ENCODE measurements at regions of chr9 and their contacts with region 1.

Region 1: DNA sequence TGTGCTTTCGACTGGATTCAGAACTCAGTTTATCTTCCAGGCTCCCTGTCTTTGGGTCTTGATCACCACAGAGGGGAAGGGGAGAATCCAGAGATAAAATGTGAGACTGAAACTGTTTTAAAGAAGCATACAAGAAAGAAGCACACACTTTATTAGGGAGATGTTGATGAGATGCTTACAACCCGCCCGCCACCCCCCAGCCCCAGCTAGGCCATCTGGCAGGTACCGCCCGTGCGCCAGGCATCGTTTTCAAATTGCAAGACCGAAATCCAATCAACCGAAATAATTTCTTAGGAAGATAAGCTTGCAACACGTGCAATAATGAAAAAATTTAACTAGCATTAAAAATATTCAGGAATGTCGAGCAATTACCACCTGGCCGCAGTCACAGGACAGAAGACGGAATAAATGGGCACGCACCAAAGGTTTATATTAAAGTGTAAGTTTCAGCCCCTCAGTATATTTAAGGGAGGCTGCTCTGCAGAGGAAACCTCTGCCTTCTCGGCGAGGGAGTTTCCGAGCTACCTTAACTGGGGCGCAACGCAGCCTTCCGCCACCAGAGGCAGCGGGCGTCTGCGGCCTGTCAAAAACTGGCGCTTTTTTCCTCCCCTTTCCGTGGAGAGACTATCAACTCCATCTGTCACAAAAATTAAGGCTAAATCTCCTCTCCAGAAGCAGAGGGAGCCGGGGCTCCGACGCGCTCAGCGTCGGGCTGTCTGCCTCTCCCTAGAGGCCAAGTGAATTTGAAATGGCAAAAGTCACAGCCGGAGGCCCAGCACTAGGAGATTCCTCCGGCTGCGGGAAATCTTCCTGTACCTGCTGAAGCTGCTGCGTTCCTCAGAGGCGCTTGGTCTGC is 996 bp upstream of the GAS1 start:
- DNase-seq: peak; percentile 82
- H3K4me3 ChIP-seq: peak overlapping the region; percentile 83
- H3K27ac ChIP-seq: peak overlapping the region; percentile 77
- H3K4me1 ChIP-seq: peaks cover 5% of the 10 kb centered on the region
- H3K27me3 ChIP-seq: peaks cover 23% of the 10 kb centered on the region
- CTCF ChIP-seq: peak; percentile 84

Region 2: DNA sequence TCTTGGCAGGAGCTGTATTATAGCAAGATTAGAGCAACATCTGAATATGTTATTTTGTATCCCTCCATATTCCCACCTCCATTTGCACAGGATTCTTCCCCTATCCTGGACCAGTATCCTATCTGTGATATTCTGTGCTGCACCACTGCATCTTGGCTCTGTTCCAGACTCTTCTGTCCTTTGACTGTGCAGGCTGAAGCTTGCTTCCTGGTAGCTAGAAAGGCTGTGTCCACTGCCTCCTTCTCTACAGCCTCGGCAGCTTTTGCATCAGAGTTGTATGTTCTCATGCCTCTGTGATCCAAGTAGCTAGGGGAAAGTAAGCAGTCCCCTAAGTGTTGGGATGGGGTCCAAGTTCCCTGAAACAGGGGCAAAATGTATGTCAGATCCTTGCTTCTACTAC is 105.1 kb before region 1 on chr9:
- intact Hi-C with region 1: no loop called
- DNase-seq: no peak
- H3K4me3 ChIP-seq: no peak overlapping the region
- H3K27ac ChIP-seq: no peak overlapping the region
- H3K4me1 ChIP-seq: no peaks in the 10 kb centered on the region
- H3K27me3 ChIP-seq: no peaks in the 10 kb centered on the region
- CTCF ChIP-seq: no peak

Region 3: GRCh38 chr9:87725900-87726709 is 777.8 kb after region 1 on chr9 and contains the start of gene CTSL:
- intact Hi-C with region 1: loop called (anchors 10 kb)
- DNase-seq: peak; percentile 89
- H3K4me3 ChIP-seq: peak within 1 kb of the TSS; percentile 51
- H3K27ac ChIP-seq: peak within 1 kb of the TSS; percentile 90
- H3K4me1 ChIP-seq: peaks cover 4% of the 10 kb centered on the region
- H3K27me3 ChIP-seq: no peaks in the 10 kb centered on the region
- CTCF ChIP-seq: no peak
- total RNA-seq, gene CTSL: 32.1 to 69.9 TPM

Measured in colonic mucosa (tissue), 4 donors.